Activated T-helper 1 cell treated with anti-CD3 and anti-CD28 coated beads, Interleukin-12 subunit alpha, Interleukin-12 subunit beta, Interleukin-2, Interleukin-4 antibody, amounts not matched to agents 30 ng/mL and 10 ng/mL and 1 ng/mL, durations not matched to agents 14 hours and 24 hours and 36 hours (primary cell): ENCODE measurements at regions of chr4 and their contacts with region 1.

Region 1: DNA sequence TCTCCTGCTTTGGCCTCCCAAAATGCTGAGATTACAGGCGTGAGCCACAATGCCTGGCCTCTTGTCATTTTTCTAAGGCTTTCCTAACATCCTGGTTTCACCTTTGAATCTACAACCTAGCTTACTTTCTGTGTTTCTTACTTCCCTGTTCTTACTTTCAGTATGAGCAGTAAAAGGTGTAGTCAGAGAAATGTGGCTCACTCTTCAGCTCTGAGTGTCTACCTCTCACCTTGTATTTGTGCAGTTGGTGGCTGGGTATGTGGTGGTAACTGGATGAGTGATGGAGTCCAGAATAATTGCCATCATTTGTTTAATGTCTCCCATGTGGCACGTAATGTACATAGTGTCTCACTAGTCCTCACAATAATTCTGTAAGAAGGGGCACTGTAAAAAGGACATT is 19.1 kb upstream of the CXCL11 start:
- DNase-seq: peak; percentile 9
- H3K4me3 Mint-ChIP-seq: peak overlapping the region; percentile 23
- H3K27ac Mint-ChIP-seq: peak overlapping the region; percentile 52
- H3K4me1 Mint-ChIP-seq: peaks cover 57% of the 10 kb centered on the region
- H3K27me3 Mint-ChIP-seq: no peaks in the 10 kb centered on the region

Region 2: GRCh38 chr4:75630174-75630936 is 424.7 kb before region 1 on chr4 and contains the start of gene CDKL2:
- intact Hi-C with region 1: loop called (anchors 5 kb)
- DNase-seq: peak; percentile 89
- H3K4me3 Mint-ChIP-seq: peak within 1 kb of the TSS; percentile 86
- H3K27ac Mint-ChIP-seq: peak within 1 kb of the TSS; percentile 40
- H3K4me1 Mint-ChIP-seq: peaks cover 20% of the 10 kb centered on the region
- H3K27me3 Mint-ChIP-seq: peaks cover 11% of the 10 kb centered on the region
- total RNA-seq, gene CDKL2: 0.16 and 0.22 TPM in 2 replicates

Region 3: GRCh38 chr4:75940692-75941253 is 114.2 kb before region 1 on chr4 and contains the start of gene NAAA:
- intact Hi-C with region 1: loop called (anchors 2 kb)
- DNase-seq: peak; percentile 83
- H3K4me3 Mint-ChIP-seq: peak within 1 kb of the TSS; percentile 98
- H3K27ac Mint-ChIP-seq: peak within 1 kb of the TSS; percentile 96
- H3K4me1 Mint-ChIP-seq: peaks cover 32% of the 10 kb centered on the region
- H3K27me3 Mint-ChIP-seq: no peaks in the 10 kb centered on the region
- total RNA-seq, gene NAAA: 31.3 and 31.8 TPM in 2 replicates

Region 4: GRCh38 chr4:76024065-76024464 is 31.0 kb before region 1 on chr4:
- intact Hi-C with region 1: loop called (anchors 1 kb)
- DNase-seq: no peak
- H3K4me3 Mint-ChIP-seq: peak overlapping the region; percentile 4
- H3K27ac Mint-ChIP-seq: peak overlapping the region; percentile 24
- H3K4me1 Mint-ChIP-seq: peaks cover 46% of the 10 kb centered on the region
- H3K27me3 Mint-ChIP-seq: no peaks in the 10 kb centered on the region

Region 5: GRCh38 chr4:76148142-76148865 is 93.3 kb after region 1 on chr4 and contains the start of gene NUP54:
- intact Hi-C with region 1: loop called (anchors 2 kb)
- DNase-seq: peak; percentile 94
- H3K4me3 Mint-ChIP-seq: peak within 1 kb of the TSS; percentile 99
- H3K27ac Mint-ChIP-seq: peak within 1 kb of the TSS; percentile 97
- H3K4me1 Mint-ChIP-seq: peaks cover 35% of the 10 kb centered on the region
- H3K27me3 Mint-ChIP-seq: no peaks in the 10 kb centered on the region
- total RNA-seq, gene NUP54: 70.6 and 75.1 TPM in 2 replicates

Region 6: GRCh38 chr4:77022560-77023179 is 967.7 kb after region 1 on chr4:
- intact Hi-C with region 1: loop called (anchors 5 kb)
- DNase-seq: no peak
- H3K4me3 Mint-ChIP-seq: no peak overlapping the region
- H3K27ac Mint-ChIP-seq: no peak overlapping the region
- H3K4me1 Mint-ChIP-seq: peaks cover 21% of the 10 kb centered on the region
- H3K27me3 Mint-ChIP-seq: peaks cover 5% of the 10 kb centered on the region